Tibial artery (tissue), 4 donors: ENCODE measurements at regions of chr3 and their contacts with region 1.

Region 1: DNA sequence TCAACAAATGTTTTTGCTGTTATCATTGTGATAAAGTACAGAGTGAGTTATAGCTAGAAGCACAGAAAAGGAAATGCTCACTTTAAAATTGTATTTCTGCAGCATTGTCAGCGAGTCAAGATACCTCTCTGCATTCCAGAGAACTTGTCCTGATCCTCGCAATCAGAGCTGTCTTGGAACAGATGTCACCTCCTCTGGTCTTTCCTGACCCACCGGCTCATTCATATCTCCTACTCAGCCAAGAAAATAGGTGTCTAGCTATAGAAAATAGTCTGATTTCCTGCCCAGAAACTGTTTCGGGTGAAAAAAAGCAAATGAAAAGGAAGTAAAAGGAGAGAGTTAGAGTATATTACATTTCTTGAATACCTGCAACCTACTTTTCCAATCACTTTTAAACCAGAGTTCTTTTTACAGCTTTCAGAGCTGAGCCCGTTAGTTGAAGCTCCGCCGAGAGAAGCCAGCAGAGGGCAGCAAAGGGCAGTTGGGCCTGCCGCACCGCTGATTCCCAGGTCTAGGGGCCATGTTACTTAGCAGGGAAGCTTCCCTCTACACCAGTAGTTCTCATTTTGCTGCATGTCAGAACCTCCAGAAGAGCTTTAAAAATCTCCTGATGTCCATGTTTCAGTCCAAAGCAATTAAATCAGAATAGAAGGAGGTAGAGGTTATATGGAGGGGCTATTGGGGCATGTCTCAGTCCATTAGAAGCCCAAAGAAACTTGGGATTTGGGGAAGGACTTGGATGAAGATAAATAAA is 185.7 kb upstream of the THRB start:
- DNase-seq: peak; percentile 56 to 77
- H3K4me3 ChIP-seq: no peak overlapping the region
- H3K27ac ChIP-seq: no peak overlapping the region
- H3K4me1 ChIP-seq: peaks cover 0 to 5% (median 4%) of the 10 kb centered on the region in 4 donors
- H3K27me3 ChIP-seq: no peaks in the 10 kb centered on the region
- CTCF ChIP-seq: peak; percentile 60 to 85

Region 2: DNA sequence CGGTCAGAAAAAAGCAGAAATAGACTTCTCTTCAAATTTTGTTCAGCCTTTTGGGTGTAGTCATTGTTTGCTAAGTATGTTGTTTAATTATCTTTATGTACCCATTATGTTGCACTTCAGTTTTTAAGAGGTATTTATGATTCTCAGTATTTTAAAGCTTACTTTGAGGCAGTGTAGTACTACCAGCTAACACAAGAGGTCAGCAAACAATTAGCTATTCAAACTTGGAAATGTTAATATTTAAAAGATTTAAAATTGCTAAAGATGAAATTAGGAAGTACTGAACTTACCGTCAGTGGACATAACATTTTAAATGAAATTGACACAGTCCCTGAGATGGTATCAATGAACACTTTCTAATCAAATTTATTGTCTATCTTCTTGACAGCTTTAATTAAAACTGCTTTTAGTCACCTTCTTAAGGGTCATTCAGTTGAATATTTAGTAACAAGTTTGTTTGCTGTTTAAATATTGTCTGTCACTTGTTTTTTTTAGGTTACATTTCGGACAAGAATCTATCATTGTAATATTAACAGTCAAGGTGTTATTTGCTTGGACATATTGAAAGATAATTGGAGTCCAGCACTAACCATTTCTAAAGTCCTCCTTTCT is 791.7 kb before region 1 on chr3:
- intact Hi-C with region 1: loop called (anchors 10 kb)
- DNase-seq: no peak
- H3K4me3 ChIP-seq: no peak overlapping the region
- H3K27ac ChIP-seq: no peak overlapping the region
- H3K4me1 ChIP-seq: no peaks in the 10 kb centered on the region
- H3K27me3 ChIP-seq: no peaks in the 10 kb centered on the region
- CTCF ChIP-seq: peak; percentile 82 to 90

Region 3: DNA sequence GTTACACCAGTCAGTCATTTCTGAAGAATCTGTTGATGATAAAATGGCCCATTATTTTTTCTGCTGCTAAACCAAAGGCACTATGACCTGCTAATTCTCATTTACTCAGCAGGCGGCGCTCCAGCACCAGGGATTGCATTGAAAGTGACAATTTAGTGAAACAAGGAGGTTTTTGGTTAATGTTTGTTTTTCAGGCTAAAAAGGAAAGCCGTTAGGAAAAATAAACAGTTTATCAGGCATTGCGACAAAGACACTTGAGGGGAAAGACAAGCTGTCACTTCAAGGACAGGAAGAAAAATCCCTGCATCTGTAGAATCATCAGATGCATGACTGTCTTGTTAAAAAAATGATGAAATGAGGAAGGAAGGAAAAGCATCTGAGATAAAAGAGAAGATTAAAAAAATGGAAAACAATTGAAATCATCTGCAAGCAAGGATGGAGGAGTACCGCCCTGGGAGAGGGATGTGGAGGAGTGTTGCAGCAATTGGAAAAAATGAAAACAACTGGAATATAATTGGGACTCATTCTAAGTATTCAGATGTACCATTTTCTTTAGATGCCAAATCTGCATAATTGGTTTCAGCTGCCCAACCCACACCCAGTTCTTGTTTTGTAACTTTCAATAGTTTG is 681.3 kb before region 1 on chr3:
- intact Hi-C with region 1: loop called (anchors 5 kb)
- DNase-seq: peak; percentile 81 to 84
- H3K4me3 ChIP-seq: no peak overlapping the region
- H3K27ac ChIP-seq: peak overlapping the region in 1 of 2 donors; percentile 20
- H3K4me1 ChIP-seq: peaks cover 0 to 16% (median under 1%) of the 10 kb centered on the region in 4 donors
- H3K27me3 ChIP-seq: no peaks in the 10 kb centered on the region
- CTCF ChIP-seq: peak; percentile 91 to 99

Region 4: DNA sequence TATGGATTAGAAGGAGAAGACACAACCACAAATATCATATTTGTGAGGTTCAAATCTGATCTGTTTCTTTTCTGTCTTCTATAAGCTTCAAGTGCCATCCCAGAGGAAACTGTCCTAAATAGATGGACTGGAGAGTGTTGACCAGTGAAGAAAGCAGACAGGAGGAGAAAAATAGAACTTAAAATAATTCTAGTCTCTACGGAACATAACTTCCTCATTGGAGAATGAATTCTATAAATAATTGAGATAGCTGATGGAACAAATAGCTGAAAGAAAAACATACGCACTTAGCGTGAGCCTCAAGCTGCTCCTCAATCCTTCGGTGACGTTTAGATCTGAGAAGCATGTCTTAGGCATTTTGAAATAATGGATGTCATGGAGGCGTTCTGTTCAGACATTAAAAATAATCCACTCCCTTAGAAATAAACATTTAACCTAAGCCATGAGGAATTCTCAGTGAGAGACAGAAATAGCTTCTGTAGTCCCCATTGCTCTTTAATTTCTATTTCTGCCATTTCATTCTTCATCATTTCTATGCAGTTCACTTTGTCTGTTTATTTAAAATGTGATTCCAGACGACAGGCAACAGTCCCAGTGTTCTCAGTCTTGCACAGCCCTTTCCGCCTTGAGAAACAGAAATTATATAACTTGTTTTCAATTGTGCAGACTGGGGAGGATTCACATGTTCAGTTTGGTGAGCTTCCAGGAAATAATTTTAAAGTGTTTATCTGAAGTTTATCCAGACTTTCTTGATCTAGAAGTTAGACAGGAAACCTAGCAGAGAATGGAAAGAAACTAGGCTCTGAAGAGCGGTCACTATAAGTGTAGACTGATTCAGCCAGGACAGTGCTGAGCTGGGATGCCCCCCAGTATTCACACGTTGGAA is 638.0 kb before region 1 on chr3:
- intact Hi-C with region 1: no loop called
- DNase-seq: no peak
- H3K4me3 ChIP-seq: peak overlapping the region; percentile 10 to 38
- H3K27ac ChIP-seq: peak overlapping the region; percentile 87 to 90
- H3K4me1 ChIP-seq: peaks cover 0 to 62% (median 21%) of the 10 kb centered on the region in 4 donors
- H3K27me3 ChIP-seq: no peaks in the 10 kb centered on the region
- CTCF ChIP-seq: no peak

Region 5: GRCh38 chr3:24521420-24522145 is 158.8 kb before region 1 on chr3:
- intact Hi-C with region 1: loop called (anchors 10 kb)
- DNase-seq: peak; percentile 47 to 80
- H3K4me3 ChIP-seq: peak overlapping the region; percentile 68 to 74
- H3K27ac ChIP-seq: peak overlapping the region; percentile 78 to 82
- H3K4me1 ChIP-seq: peaks cover 0 to 13% (median 5%) of the 10 kb centered on the region in 4 donors
- H3K27me3 ChIP-seq: no peaks in the 10 kb centered on the region
- CTCF ChIP-seq: no peak